HepG2 (cell line): ENCODE measurements at regions of chr1 and their contacts with region 1.

Region 1: DNA sequence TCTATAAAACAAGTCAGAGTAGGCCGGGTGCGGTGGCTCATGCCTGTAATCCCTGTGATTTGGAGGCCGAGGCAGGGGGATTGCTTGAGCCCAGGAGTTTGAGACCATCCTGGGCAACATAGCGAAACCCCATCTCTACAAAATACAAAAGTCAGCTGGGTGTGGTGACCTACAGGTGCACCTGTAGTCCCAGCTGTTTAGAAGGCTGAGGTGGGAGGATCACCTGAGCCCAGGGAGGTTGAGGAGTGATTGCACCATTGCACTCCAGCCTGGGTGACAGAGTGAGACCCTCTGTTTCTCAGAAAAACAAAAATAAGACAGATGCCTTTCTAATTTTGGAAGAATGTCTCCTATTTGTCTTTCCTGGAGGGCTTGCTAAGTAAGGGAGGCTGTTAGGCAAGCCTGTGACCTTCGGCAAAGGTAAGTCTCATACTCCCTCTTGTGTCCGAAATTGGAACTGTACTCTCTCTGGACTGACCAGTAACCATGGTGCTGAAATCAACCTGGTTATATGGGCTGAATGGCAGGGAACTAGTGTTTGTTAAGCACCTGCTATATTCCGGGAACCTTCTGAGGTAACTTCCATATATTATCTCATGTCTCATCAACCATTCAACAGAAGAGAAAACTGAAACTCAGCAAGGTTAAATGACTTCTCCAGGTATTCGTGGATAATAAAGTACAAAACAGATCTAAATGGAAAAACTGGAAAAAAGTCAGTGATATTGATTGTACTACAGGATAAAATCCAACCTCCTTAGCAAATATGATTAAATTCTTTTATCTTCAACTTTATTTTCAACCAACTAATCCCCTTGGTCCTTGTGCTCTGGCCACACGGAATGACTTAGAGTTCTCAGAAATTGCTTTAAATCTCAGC is 11.8 kb upstream of the RAB3B start:
- DNase-seq: peak; percentile 84
- ATAC-seq: peak; percentile 90
- H3K4me3 ChIP-seq: no peak overlapping the region
- H3K27ac ChIP-seq: no peak overlapping the region
- H3K4me1 ChIP-seq: peaks cover 20% of the 10 kb centered on the region
- H3K27me3 ChIP-seq: peaks cover 0 to 18% of the 10 kb centered on the region in 2 experiments
- CTCF ChIP-seq: peak; percentile 92
- EP300 ChIP-seq: no peak
- POLR2A ChIP-seq: no peak
- RAD21 ChIP-seq: peak; percentile 90

Region 2: DNA sequence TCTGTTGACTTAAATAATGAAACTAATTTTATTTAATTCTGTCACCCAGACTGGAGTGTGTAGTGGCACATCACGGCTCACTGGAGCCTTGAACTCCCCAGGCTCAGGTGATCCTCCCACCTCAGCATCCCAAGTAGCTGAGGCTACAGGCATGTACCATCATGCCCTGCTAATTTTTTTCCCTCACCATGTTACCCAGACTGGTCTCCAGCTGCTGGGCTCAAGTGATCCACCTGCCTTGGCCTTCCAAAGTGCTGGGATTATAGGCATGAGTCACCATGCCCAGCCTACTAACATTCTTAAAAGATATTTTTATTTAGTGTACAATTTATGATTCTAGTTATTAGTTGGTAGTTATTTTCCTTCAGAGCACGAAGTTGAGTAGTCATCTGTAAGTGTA is 173.2 kb before region 1 on chr1:
- CTCF ChIA-PET with region 1: no interaction called
- POLR2A ChIA-PET with region 1: no interaction called
- in situ Hi-C with region 1: no loop called
- intact Hi-C with region 1: loop called (anchors 10 kb)
- DNase-seq: no peak
- ATAC-seq: no peak
- H3K4me3 ChIP-seq: no peak overlapping the region
- H3K27ac ChIP-seq: no peak overlapping the region
- H3K4me1 ChIP-seq: no peaks in the 10 kb centered on the region
- H3K27me3 ChIP-seq: no peaks in the 10 kb centered on the region
- CTCF ChIP-seq: no peak
- EP300 ChIP-seq: no peak
- POLR2A ChIP-seq: no peak
- RAD21 ChIP-seq: no peak

Region 3: GRCh38 chr1:51897699-51898031 is 104.6 kb before region 1 on chr1:
- CTCF ChIA-PET with region 1: interaction called, 54 read pairs
- POLR2A ChIA-PET with region 1: interaction called, 4 read pairs
- in situ Hi-C with region 1: no loop called
- intact Hi-C with region 1: loop called (anchors 1 kb)
- DNase-seq: no peak
- ATAC-seq: no peak
- H3K4me3 ChIP-seq: no peak overlapping the region
- H3K27ac ChIP-seq: no peak overlapping the region
- H3K4me1 ChIP-seq: 0 out of 2 replicates have a peak, but pooled peaks cover 7% of the 10 kb centered on the region
- H3K27me3 ChIP-seq: peaks cover 0 to 16% of the 10 kb centered on the region in 2 experiments; a peak in 3 of 5 replicates
- CTCF ChIP-seq: no peak
- EP300 ChIP-seq: no peak
- POLR2A ChIP-seq: no peak
- RAD21 ChIP-seq: no peak

Region 4: GRCh38 chr1:51906306-51907078 is 95.8 kb before region 1 on chr1:
- CTCF ChIA-PET with region 1: no interaction called
- POLR2A ChIA-PET with region 1: no interaction called
- in situ Hi-C with region 1: loop called (anchors 5 kb)
- intact Hi-C with region 1: no loop called
- DNase-seq: no peak
- ATAC-seq: no peak
- H3K4me3 ChIP-seq: no peak overlapping the region
- H3K27ac ChIP-seq: no peak overlapping the region
- H3K4me1 ChIP-seq: no peaks in the 10 kb centered on the region
- H3K27me3 ChIP-seq: peaks cover 0 to 22% of the 10 kb centered on the region in 2 experiments; a peak in 2 of 5 replicates
- CTCF ChIP-seq: no peak
- EP300 ChIP-seq: no peak
- POLR2A ChIP-seq: no peak
- RAD21 ChIP-seq: no peak

Region 5: GRCh38 chr1:51916587-51917405 is 85.5 kb before region 1 on chr1:
- CTCF ChIA-PET with region 1: no interaction called
- POLR2A ChIA-PET with region 1: no interaction called
- in situ Hi-C with region 1: no loop called
- intact Hi-C with region 1: loop called (anchors 5 kb)
- DNase-seq: no peak
- ATAC-seq: no peak
- H3K4me3 ChIP-seq: no peak overlapping the region
- H3K27ac ChIP-seq: no peak overlapping the region
- H3K4me1 ChIP-seq: peaks cover 2% of the 10 kb centered on the region
- H3K27me3 ChIP-seq: no peaks in the 10 kb centered on the region; a peak in 1 of 5 replicates
- CTCF ChIP-seq: no peak
- EP300 ChIP-seq: no peak
- POLR2A ChIP-seq: no peak
- RAD21 ChIP-seq: no peak